Activated CD4-positive, alpha-beta T cell treated with anti-CD3 and anti-CD28 coated beads for 36 hours (primary cell): ENCODE measurements at regions of chr17 and their contacts with region 1.

Region 1: GRCh38 chr17:59004338-59005111 is 102.2 kb downstream of the TRIM37 start:
- DNase-seq: peak; percentile 81
- ATAC-seq: no peak
- H3K4me3 Mint-ChIP-seq: no peak overlapping the region
- H3K27ac Mint-ChIP-seq: peak overlapping the region; percentile 55
- H3K4me1 Mint-ChIP-seq: peaks cover 34% of the 10 kb centered on the region
- H3K27me3 Mint-ChIP-seq: no peaks in the 10 kb centered on the region

Region 2: GRCh38 chr17:58587702-58588254 is 416.7 kb before region 1 on chr17:
- CTCF ChIA-PET with region 1: interaction called, 16 read pairs
- POLR2A ChIA-PET with region 1: no interaction called
- intact Hi-C with region 1: loop called (anchors 1 kb)
- DNase-seq: peak; percentile 79
- ATAC-seq: peak; percentile 97
- H3K4me3 Mint-ChIP-seq: no peak overlapping the region
- H3K27ac Mint-ChIP-seq: no peak overlapping the region
- H3K4me1 Mint-ChIP-seq: no peaks in the 10 kb centered on the region
- H3K27me3 Mint-ChIP-seq: no peaks in the 10 kb centered on the region

Region 3: DNA sequence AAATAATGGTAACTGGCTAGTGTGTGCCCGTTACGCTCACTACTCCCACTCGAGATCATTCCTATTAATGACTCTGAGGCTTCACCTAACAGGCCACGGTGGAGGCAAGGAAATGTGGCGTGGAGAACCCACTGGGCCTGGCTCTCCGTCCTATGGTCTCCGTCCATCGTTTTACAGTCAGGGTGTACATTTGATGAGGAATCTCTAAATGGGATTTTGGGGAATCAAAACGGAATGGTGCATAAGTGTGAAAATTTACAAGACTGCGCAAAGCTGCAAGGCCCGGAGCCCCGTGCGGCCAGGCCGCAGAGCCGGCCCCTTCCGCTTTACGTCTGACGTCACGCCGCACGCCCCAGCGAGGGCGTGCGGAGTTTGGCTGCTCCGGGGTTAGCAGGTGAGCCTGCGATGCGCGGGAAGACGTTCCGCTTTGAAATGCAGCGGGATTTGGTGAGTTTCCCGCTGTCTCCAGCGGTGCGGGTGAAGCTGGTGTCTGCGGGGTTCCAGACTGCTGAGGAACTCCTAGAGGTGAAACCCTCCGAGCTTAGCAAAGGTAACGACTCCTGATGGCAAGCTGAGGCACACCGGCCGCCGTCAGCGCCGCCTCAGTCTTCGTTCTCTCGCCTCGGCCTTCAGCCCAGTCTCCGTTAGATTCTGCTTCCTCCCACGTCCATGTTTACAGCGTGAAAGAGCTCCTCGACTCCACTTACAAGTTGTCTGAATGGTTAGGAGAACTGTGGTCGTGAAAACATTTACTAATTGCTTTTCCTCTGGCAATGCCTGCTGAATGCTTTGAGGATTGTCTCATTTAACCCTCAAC is 312.1 kb before region 1 on chr17 and contains the start of gene RAD51C:
- CTCF ChIA-PET with region 1: interaction called, 7 read pairs
- POLR2A ChIA-PET with region 1: no interaction called
- intact Hi-C with region 1: loop called in 1 of 2 experiments (anchors 5 kb)
- DNase-seq: peak; percentile 94
- ATAC-seq: peak; percentile 96
- H3K4me3 Mint-ChIP-seq: peak within 1 kb of the TSS; percentile 92
- H3K27ac Mint-ChIP-seq: peak within 1 kb of the TSS; percentile 98
- H3K4me1 Mint-ChIP-seq: peaks cover 27% of the 10 kb centered on the region
- H3K27me3 Mint-ChIP-seq: no peaks in the 10 kb centered on the region
- total RNA-seq, gene RAD51C: 85.4 to 87.2 TPM

Region 4: DNA sequence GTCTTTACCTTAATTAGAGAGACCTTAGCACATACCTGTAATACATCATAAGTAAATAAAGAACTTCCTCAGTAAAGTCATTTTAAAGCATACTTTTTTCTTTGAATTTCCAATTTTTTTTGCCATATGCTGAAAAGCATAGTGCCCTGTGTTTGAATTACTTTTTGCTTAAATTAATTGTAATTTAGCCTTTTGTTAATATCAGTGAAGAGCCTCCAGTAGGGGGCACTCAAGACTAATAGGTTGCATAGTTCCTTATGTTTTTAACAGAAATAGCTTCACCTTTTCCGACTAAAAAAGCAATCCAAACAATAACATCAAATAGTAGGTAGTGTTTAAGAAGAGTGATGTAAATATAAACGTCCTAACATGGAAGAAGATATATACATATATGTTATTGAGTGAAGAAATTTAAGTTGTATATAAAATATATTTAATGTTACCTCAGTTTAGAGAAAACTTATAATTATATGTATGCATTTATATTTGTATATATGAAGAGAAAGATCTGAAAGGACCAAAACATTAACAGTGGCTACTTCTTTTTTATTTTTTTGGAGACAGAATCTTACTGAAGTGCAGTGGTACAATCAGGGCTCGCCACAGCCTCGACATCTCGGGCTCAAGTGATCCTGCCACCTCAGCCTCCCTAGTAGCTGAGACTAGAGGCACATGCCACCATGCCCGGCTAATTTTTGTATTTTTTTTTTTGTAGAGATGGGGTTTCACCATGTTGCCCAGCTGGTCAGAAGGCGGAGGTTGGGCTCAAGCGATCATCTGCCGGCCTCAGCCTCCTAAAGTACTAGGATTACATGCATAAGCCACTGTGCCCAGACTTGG is 293.4 kb before region 1 on chr17:
- CTCF ChIA-PET with region 1: interaction called, 39 read pairs
- POLR2A ChIA-PET with region 1: no interaction called
- intact Hi-C with region 1: loop called (anchors 1 kb)
- DNase-seq: peak; percentile 50
- ATAC-seq: no peak
- H3K4me3 Mint-ChIP-seq: no peak overlapping the region
- H3K27ac Mint-ChIP-seq: no peak overlapping the region
- H3K4me1 Mint-ChIP-seq: peaks cover 8% of the 10 kb centered on the region
- H3K27me3 Mint-ChIP-seq: no peaks in the 10 kb centered on the region

Region 5: DNA sequence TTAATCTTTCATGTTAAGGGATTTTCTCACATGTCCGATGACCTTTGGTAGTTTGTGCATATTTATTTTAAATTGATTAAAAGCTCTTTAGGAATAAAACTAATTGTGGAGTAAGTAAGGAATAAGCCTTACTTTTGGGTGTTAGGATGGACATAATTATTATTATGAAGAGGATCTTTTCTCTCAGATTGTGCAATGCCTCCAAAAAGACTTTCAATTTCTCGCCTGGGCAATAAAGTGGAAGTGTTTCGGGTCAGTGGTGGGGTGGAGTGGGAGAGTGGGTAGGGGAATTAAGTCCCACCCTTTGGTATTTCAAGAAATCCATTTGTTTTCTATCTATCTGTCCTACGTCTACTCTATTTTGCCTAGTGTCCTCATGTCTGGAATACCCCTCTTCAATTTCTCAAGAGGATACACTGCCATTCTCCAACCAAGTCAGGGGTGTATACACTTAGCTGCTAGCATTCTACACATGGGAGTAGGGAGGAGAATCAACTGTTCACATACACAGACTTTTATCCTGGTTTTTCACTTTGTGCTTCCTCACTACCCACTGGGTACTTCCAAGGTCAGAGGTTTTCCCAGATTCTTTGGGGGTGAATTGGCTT is 119.0 kb before region 1 on chr17:
- CTCF ChIA-PET with region 1: no interaction called
- POLR2A ChIA-PET with region 1: no interaction called
- intact Hi-C with region 1: loop called in 1 of 2 experiments (anchors 10 kb)
- DNase-seq: no peak
- ATAC-seq: no peak
- H3K4me3 Mint-ChIP-seq: no peak overlapping the region
- H3K27ac Mint-ChIP-seq: no peak overlapping the region
- H3K4me1 Mint-ChIP-seq: no peaks in the 10 kb centered on the region
- H3K27me3 Mint-ChIP-seq: peaks cover 19% of the 10 kb centered on the region

Region 6: GRCh38 chr17:58991718-58992331 is 12.7 kb before region 1 on chr17:
- CTCF ChIA-PET with region 1: interaction called, 6 read pairs
- POLR2A ChIA-PET with region 1: no interaction called
- intact Hi-C with region 1: loop called in 1 of 2 experiments (anchors 1 kb)
- DNase-seq: peak; percentile 40
- ATAC-seq: peak; percentile 86
- H3K4me3 Mint-ChIP-seq: no peak overlapping the region
- H3K27ac Mint-ChIP-seq: peak overlapping the region; percentile 6
- H3K4me1 Mint-ChIP-seq: peaks cover 13% of the 10 kb centered on the region
- H3K27me3 Mint-ChIP-seq: no peaks in the 10 kb centered on the region

Region 7: DNA sequence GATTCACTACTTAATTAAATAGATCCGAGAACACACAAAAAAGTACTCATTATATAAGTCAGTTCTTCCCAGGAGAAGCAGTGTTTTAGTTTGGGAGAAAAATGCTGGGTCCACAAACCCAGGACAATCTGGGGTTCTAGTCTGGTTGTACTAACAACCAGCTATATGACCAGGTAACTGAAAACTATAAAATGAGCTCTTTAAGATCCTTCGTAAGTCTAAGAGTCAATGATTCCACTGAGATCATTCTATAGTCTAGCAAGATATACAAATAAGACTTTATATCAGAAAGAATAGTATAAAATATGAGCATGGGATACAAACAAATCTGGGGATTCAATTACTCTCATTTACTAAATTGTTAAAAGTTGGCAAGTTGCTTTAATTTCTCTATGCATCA is 36.6 kb after region 1 on chr17:
- CTCF ChIA-PET with region 1: no interaction called
- POLR2A ChIA-PET with region 1: no interaction called
- intact Hi-C with region 1: no loop called
- DNase-seq: no peak
- ATAC-seq: no peak
- H3K4me3 Mint-ChIP-seq: no peak overlapping the region
- H3K27ac Mint-ChIP-seq: no peak overlapping the region
- H3K4me1 Mint-ChIP-seq: peaks cover 6% of the 10 kb centered on the region
- H3K27me3 Mint-ChIP-seq: no peaks in the 10 kb centered on the region